AG04449 (cell line): ENCODE measurements at regions of chr14 and their contacts with region 1.

Region 1: GRCh38 chr14:105180592-105181548 is at the start of gene NUDT14:
- DNase-seq: no peak
- H3K4me3 ChIP-seq: peak within 1 kb of the TSS; percentile 54
- CTCF ChIP-seq: no peak

Region 2: DNA sequence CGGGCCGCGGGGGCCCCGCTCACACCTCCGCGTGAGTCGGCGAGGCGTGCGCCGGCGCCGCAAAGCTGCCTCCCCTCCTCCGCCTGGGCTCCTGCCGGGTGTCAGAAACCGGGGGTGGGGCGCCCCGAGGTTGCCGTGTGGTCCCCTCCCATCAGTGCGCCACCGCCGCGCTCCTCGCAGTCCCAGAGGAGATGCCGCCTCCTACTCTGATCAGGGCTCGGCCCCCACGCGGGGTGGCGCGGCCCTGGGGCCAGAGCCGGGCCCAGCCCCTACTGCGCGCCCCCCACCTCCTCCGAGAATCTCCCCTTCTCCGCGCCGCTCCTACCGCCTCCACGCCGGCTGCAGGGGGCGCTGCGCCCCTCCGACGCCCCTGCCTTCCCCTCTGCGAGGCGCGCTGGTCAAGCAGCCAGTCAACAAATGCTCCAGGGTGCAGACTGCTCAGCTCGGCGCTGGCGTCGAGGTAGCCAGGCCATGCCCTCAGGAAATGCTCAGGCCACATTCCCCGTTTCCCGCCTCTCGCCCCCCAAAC is 11.8 kb before region 1 on chr14:
- CTCF ChIA-PET with region 1: interaction called, 12 read pairs
- POLR2A ChIA-PET with region 1: interaction called, 5 read pairs
- DNase-seq: no peak
- H3K4me3 ChIP-seq: no peak overlapping the region
- CTCF ChIP-seq: peak; percentile 54

Region 3: GRCh38 chr14:105193916-105194782 is 13.3 kb after region 1 on chr14:
- CTCF ChIA-PET with region 1: interaction called, 11 read pairs
- POLR2A ChIA-PET with region 1: no interaction called
- DNase-seq: no peak
- H3K4me3 ChIP-seq: no peak overlapping the region
- CTCF ChIP-seq: no peak

Region 4: DNA sequence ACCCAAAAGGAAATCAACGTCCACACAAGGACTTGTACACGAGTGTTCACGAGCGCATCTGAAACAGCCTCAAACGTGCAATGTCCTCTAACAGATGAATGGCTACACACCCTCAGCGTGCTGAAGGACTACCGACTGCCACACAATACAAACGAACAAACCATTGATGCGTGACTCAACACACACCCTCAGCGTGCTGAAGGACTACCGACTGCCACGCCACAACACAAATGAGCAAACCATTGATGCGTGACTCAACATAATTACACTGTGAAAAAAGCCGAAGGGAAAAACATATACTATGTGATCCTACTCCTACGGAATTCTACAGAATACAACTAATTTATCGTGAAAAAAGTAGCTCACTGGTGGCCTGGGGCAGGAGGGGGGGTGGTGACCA is 42.4 kb after region 1 on chr14:
- CTCF ChIA-PET with region 1: no interaction called
- POLR2A ChIA-PET with region 1: no interaction called
- DNase-seq: no peak
- H3K4me3 ChIP-seq: no peak overlapping the region
- CTCF ChIP-seq: no peak